Activated CD4-positive, alpha-beta T cell treated with anti-CD3 and anti-CD28 coated beads, Interleukin-2, amount 10 ng/mL, durations not matched to agents 24 days and 14 days (primary cell): ENCODE measurements at regions of chr1 and their contacts with region 1.

Region 1: DNA sequence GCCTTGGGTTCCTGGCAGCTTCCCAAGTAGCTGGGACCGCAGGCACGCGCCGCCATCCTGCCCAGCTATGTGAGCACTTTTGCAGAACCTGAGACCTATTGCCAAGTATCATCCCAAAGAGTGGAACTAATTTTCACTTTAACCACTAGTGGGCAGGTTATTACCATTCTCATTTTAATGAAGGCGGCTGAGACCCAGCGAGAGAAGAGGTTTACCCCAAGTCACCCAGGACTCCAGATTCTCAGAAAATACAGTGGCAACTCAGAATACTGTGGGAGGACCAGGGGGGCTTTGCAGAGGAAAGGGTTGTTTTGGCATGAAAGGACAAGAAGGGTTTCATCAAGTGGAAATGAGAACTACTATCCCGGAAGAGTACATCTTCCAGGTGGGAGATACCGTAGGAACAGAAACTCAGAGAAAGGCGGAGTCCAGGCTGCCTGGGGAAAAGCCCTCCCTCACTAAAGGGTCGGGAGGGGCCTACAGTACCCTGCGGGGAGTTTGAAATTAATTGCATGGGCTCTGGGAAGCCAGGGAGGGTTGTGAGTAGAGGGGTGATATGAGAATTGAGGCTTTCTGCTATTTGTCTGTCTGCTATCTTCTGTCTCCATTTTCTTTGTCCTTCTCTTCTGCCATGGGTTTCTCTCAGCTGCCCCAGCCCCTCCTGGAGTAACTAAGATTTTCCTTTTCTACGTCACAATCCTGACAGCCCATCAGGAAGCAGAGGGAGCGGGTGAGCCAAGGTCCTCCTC is 7.2 kb upstream of the SEMA4A start:
- DNase-seq: peak; percentile 84
- H3K4me3 Mint-ChIP-seq: peak overlapping the region; percentile 61
- H3K27ac Mint-ChIP-seq: peak overlapping the region; percentile 90
- H3K4me1 Mint-ChIP-seq: peaks cover 29% of the 10 kb centered on the region
- H3K27me3 Mint-ChIP-seq: no peaks in the 10 kb centered on the region

Region 2: DNA sequence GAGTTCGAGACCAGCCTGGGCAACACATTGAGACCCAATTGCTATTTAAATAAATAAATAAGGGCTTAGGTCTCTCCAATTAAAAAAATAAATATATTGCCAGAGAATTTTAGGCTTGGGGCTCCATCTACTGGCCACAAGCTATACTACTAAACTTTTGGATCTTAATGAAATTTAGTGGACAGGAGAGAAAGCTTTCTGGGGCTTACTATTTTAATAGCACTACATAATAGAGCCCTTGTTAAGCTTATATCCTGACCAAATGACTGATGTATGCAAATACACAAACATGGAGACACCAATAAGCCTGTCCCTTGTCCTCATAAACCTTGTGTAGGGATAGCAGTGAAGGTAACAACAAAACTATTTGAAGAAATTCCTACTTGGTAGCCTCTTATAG is 173.5 kb after region 1 on chr1:
- intact Hi-C with region 1: loop called (anchors 5 kb)
- DNase-seq: peak; percentile 68
- H3K4me3 Mint-ChIP-seq: no peak overlapping the region
- H3K27ac Mint-ChIP-seq: no peak overlapping the region
- H3K4me1 Mint-ChIP-seq: no peaks in the 10 kb centered on the region
- H3K27me3 Mint-ChIP-seq: no peaks in the 10 kb centered on the region